MCF 10A (cell line): ENCODE measurements at regions of chr6 and their contacts with region 1.

Region 1: GRCh38 chr6:37169496-37170272 is at the start of gene PIM1:
- DNase-seq: peak; percentile 96
- H3K4me3 Mint-ChIP-seq: peak within 1 kb of the TSS; percentile 81
- H3K27ac Mint-ChIP-seq: peak within 1 kb of the TSS; percentile 93
- H3K4me1 Mint-ChIP-seq: peaks cover 10% of the 10 kb centered on the region
- H3K27me3 Mint-ChIP-seq: no peaks in the 10 kb centered on the region
- CTCF ChIP-seq: no peak
- total RNA-seq, gene PIM1: 6.0 and 6.2 TPM in 2 replicates

Region 2: GRCh38 chr6:36885461-36886401 is 284.0 kb before region 1 on chr6 and contains the start of gene C6orf89:
- CTCF ChIA-PET with region 1: interaction called, 6 read pairs
- POLR2A ChIA-PET with region 1: no interaction called
- intact Hi-C with region 1: loop called (anchors 2 kb)
- DNase-seq: peak; percentile 99
- H3K4me3 Mint-ChIP-seq: peak within 1 kb of the TSS; percentile 80
- H3K27ac Mint-ChIP-seq: peak within 1 kb of the TSS; percentile 88
- H3K4me1 Mint-ChIP-seq: peaks cover 16% of the 10 kb centered on the region
- H3K27me3 Mint-ChIP-seq: no peaks in the 10 kb centered on the region
- CTCF ChIP-seq: peak; percentile 63
- total RNA-seq, gene C6orf89: 36.9 and 43.1 TPM in 2 replicates

Region 3: GRCh38 chr6:37029249-37029971 is 140.3 kb before region 1 on chr6:
- CTCF ChIA-PET with region 1: interaction called, 359 read pairs
- POLR2A ChIA-PET with region 1: interaction called, 117 read pairs
- intact Hi-C with region 1: loop called (anchors 1 kb)
- DNase-seq: peak; percentile 78
- H3K4me3 Mint-ChIP-seq: no peak overlapping the region
- H3K27ac Mint-ChIP-seq: peak overlapping the region; percentile 9
- H3K4me1 Mint-ChIP-seq: peaks cover 20% of the 10 kb centered on the region
- H3K27me3 Mint-ChIP-seq: no peaks in the 10 kb centered on the region
- CTCF ChIP-seq: peak; percentile 58

Region 4: DNA sequence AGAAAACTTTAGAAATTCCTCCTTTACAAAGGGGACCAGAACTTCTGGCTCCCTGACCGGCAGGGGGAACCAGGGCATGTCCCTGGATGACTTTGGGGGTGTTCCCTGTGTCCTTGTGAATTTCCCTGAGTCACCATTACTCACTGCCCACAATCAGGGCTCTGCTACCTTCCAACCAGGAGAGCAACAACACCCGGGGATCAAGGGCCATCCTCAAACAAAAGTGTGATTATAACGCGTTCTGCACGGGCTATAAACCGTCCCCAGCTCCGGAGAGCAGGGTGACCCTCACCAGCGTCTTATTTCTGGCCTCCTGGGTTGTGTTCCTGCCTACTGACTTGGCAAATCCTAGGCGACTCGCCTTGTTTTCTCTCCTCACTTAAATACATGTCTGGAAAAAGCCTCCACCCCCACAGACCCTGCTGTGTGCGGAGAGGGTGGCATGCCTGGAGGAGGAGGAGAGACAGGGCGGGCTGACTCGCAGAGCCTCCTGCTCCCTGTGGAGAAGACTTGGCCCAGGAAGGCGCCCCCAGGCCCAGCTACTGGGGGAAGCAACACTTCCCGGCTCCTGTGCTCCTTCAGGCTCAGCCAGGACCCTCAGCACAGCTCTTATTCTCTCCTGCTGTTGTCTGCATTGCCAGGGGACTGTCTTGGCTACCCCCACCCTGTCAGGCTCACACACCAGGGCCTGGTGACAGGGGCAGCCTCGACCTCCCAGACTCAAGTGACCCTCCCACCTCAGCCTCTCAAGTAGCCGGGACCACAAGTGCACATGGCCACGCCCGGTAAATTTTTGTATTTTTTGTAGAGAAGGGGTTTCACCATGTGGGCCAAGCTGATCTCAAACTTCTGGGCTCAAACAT is 110.1 kb before region 1 on chr6:
- CTCF ChIA-PET with region 1: interaction called, 249 read pairs
- POLR2A ChIA-PET with region 1: interaction called, 111 read pairs
- intact Hi-C with region 1: loop called (anchors 1 kb)
- DNase-seq: peak; percentile 97
- H3K4me3 Mint-ChIP-seq: peak overlapping the region; percentile 46
- H3K27ac Mint-ChIP-seq: peak overlapping the region; percentile 91
- H3K4me1 Mint-ChIP-seq: peaks cover 31% of the 10 kb centered on the region
- H3K27me3 Mint-ChIP-seq: no peaks in the 10 kb centered on the region
- CTCF ChIP-seq: peak; percentile 66

Region 5: DNA sequence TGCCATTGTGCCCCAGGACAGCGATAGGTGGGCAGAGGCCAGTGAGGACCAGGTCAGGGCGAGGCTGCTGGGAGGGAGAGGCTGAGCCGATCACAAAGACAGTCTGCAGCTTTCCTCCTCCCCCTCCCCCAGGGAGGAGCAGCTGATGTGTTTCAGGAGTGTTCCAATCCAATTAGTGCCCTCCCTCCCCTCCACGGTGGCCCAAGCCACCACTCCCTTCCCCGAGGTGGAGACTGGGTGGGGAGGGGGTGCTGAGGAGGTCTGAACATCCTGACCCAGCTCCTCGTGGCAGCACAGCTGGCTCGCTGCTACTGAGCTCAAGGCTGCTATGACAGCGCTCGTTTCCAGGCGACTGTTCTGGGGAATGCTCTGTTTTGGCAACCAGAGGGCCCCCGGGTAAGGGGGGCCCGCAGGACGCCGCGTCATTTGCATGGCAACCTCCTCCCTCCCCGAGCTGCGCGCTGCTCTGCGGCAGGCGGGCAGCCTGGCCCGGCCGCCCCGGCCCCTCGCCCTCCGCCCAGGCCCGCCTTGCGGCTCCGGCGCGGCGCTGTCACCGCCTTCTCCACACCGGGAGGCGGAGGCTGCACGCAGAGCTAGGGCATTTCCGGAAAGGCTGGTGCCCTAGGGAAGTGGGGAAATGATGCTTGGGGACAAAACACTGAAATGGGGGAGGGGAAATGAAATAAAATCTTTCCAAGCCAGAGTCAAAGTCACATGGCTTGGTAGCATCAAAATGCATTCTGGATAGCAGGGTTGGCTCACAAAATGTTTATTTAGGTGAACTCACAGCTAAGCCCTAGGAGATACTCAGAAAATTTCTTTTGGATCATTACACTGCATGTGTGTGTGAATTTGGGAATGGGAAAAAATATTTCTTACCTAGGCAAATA is 67.2 kb before region 1 on chr6:
- CTCF ChIA-PET with region 1: interaction called, 11 read pairs
- POLR2A ChIA-PET with region 1: interaction called, 18 read pairs
- intact Hi-C with region 1: loop called (anchors 1 kb)
- DNase-seq: peak; percentile 72
- H3K4me3 Mint-ChIP-seq: peak overlapping the region; percentile 67
- H3K27ac Mint-ChIP-seq: peak overlapping the region; percentile 93
- H3K4me1 Mint-ChIP-seq: peaks cover 13% of the 10 kb centered on the region
- H3K27me3 Mint-ChIP-seq: no peaks in the 10 kb centered on the region
- CTCF ChIP-seq: no peak

Region 6: DNA sequence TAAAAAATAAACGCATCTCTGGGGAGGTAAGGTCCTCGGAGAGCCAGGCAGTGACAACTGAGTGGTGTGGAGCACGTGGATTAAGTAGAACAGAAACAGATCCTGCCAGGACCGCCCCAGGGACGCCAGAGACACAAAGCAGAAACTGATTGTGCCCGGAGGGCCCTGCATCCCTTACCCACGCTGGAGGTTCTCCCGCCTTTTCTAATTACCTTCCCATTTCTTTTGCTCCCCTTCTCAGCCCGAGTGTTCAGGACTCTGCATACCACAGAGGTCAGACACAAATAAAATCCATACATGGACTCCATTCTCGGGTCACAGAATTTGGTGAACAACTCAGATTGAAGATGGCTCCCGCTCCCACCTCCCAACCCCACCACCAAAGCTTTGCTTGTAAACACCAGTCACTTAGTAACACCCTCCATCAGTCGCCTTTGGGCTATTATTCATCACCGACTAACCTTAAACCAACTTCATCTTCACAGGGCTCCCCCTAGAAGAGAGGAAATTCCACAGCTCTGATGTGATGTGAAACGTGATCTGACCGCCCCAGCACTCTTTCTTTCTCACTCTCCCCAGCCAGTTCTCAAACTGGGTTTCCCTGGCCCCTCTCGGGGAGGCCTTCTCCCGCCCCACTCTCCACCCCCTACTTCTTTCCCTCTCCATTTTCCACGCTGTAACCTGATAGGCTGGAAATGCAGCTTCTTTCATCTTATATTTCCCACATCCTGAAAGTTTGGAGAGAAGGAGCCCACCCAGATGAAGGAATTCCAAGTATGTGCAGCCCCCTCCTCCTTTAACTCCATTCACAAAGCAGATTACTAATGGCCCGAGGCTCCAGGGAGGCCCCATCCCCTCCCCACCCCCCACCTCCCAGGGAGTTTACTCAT is 32.2 kb before region 1 on chr6:
- CTCF ChIA-PET with region 1: interaction called, 16 read pairs
- POLR2A ChIA-PET with region 1: interaction called, 24 read pairs
- intact Hi-C with region 1: loop called (anchors 1 kb)
- DNase-seq: peak; percentile 90
- H3K4me3 Mint-ChIP-seq: no peak overlapping the region
- H3K27ac Mint-ChIP-seq: peak overlapping the region; percentile 62
- H3K4me1 Mint-ChIP-seq: peaks cover 34% of the 10 kb centered on the region
- H3K27me3 Mint-ChIP-seq: no peaks in the 10 kb centered on the region
- CTCF ChIP-seq: no peak